Left ventricle myocardium superior (tissue), 1 donor: ENCODE measurements at regions of chr3 and their contacts with region 1.

Region 1: GRCh38 chr3:33791477-33792166 is 6.8 kb upstream of the PDCD6IP start:
- DNase-seq: no peak
- ATAC-seq: no peak

Region 2: DNA sequence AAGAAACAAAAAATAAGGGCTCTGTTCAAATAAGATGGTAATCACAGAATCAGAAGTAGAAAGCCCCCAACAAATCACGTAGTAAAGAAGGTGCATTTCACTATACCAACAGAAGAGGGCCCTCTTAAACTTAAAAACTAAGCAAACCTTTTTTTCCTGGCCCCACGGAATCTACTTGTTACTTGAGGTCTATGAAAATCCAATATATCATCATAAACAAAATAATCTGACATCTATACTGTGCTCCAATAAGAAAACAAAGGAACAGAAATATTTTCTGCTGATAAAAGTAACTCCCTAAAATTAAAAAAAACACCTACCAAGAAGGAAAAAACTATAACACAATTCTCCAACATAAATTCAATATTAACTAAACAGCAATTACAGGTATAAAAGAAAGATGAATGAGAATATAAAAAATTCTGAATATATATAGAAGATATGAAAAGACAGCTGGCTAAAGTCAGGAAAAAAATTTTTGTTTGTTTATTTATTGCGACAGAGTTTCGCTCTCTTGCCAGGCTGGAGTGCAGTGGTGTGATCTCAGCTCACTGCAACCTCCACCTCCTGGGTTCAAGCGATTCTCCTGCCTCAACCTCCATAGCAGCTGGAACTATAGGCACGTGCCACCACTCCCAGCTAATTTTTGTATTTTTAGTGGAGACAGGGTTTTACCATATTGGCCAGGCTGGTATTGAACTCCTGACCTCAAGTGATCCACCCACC is 155.3 kb before region 1 on chr3:
- intact Hi-C with region 1: loop called (anchors 5 kb)
- DNase-seq: no peak
- ATAC-seq: no peak

Region 3: DNA sequence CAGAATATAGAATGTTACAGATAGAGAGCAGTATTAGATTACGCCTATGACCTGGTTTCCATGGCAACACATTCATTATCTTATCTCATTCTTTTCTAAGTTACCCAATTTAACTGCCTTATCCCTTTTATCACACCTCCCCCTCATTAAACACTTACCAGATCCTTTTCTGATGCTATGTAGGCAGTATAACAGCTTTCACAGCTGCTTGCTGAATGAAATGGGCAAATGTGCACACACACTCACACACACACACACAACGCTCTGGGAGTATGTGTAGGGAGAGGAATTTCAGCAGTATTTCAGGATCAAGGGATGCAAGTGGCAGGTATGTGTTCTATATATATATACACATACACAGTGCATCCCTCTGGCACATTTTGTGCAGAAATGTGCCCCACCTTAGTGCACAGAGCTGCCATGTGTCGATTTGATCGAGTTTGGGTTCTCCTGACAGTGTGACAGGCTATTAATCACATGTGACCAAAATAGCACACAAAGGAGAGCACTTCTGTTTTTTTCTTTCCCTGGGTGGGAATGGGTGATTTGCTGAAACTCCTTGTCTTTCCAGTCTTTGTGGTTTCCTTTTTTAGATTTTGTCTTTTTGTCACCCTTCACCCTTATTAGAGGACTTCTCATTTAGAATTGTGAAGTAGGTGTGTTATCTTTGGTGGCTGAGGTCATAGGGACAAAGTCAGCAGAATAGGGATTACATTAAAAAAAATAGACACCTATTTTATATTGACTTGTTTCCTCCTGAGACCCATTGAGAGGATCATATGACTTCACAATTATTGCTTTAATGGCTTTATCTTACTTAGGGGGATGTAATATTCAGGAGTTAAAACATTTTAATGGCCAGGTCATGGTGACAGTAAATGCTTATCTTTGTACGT is 560.5 kb after region 1 on chr3:
- intact Hi-C with region 1: no loop called
- DNase-seq: no peak
- ATAC-seq: no peak